Posterior cingulate gyrus (tissue), 11 donors: ENCODE measurements at regions of chr20 and their contacts with region 1.

Region 1: GRCh38 chr20:59782986-59783640 is 150.3 kb downstream of the SYCP2 start:
- DNase-seq: peak; percentile 51 to 96 (median 76)

Region 2: DNA sequence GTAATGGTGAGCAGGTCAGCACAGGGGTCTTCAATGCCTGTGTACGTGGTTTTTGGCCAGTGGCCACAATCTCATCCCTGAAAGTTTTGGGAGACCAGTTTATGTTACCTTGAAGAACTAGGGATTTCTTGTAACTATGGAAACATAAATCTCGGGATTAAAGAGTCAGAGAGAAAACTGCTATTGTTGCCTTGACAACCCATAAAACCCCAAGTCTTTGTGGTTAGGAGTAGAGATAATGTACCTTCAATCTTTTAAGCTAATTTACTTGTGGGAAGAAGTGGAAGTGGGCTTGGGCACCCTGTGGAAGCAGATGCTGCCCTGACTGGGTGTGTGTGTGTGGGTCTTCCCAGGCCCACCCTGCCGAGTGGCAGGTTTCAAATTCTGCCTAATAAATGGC is 665.6 kb before region 1 on chr20:
- intact Hi-C with region 1: no loop called
- DNase-seq: no peak

Region 3: GRCh38 chr20:59820204-59821041 is 37.3 kb after region 1 on chr20:
- intact Hi-C with region 1: loop called (anchors 5 kb)
- DNase-seq: peak in 8 of 10 donors; percentile 44 to 93 (median 71)

Region 4: DNA sequence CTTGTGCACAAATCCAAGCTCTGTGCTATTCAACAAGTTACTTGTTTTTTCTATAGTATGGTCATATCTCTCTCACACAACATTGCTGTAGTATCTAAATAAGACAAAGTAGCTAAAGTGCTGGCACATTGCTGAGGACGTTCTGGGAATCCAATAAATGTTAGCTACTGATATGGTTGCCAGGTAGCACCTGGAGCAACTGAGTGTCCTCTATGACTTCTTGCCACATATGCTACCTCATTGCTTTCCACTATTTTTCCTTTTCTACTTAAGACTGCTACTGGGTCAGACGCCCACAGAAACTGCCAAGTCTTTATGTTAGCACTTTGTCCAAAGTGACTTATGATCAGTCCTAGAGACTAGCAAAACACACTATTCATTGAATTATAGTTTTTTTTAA is 65.1 kb after region 1 on chr20:
- intact Hi-C with region 1: loop called (anchors 5 kb)
- DNase-seq: no peak

Region 5: DNA sequence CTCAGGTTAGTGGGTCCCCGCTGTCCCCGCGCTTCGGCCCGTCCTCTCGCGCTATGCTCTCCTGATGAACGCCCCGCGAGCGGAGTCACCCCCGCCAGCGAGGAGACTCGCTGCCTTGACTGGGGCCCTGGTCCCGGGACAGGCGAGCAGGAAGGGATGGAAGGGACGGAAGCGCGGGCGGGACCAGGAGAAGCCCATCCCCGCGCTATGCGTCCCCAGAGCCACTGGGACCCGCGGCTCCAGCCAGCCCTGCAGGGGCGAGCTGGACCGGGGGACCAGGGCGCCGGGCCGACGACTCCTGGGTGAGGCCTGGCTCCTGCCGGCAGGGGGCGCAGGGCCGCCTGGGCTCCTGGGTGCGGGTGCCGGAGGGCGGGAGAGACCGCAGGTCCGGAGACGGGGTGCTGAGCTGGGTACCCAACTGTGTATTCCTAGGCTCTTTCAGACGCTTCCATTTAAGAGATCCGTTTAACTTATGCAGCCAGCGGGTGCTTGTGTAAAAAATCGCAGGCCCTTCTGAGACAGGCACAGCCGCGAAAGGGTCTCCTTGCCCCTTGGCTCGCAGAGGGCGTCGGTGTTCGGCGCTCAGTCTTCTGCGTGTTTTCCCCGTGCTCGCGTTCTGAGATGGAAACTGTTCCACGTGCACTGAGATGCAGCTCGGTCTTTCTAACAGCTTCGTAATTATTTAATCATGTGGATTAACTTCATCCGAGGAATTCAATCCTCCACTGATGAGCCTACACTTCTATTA is 150.9 kb after region 1 on chr20:
- intact Hi-C with region 1: loop called (anchors 10 kb)
- DNase-seq: peak; percentile 63 to 98 (median 80)